Sigmoid colon (tissue), 7 donors: ENCODE measurements at regions of chr12 and their contacts with region 1.

Region 1: GRCh38 chr12:95532851-95533250 is 18.4 kb downstream of the USP44 start:
- DNase-seq: no peak
- H3K4me3 ChIP-seq: no peak overlapping the region
- H3K27ac ChIP-seq: no peak overlapping the region
- H3K4me1 ChIP-seq: peaks cover 0 to 13% (median 11%) of the 10 kb centered on the region in 4 donors
- H3K27me3 ChIP-seq: no peaks in the 10 kb centered on the region
- CTCF ChIP-seq: no peak
- EP300 ChIP-seq: no peak
- POLR2A ChIP-seq: no peak

Region 2: DNA sequence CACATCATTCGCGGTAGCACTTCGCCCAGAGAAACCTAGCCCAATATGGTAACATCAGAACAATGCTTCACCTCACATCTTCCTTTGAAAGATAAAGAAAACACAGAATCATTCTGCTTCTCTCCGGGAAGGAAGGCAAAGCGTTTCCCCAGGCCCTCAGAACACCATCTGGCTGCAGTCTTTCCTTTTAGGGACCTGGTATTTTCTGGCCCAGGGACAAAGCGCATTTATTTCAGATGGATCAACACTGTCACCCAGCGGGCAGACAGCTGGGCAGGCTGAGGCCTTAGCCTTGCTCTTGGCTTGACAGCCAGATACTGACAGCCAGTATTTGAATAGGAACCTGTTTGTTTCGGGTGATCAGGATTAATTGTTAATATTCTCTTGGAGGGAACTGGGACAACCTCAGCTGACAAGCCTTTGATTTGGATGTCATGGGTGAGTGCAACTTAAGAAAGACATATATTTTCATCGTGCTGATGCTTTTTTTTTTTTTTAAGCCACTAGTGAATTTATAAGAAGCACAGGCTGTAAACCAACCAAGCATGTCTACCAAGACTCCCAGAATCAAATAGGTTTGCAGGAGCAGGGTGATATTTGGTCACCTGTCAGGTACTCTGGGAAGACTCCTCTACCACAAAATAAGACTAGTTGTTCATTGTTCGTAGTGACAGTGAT is 196.3 kb before region 1 on chr12:
- intact Hi-C with region 1: loop called (anchors 5 kb)
- DNase-seq: peak; percentile 89
- H3K4me3 ChIP-seq: peak overlapping the region in 2 of 4 donors; percentile 8 to 24
- H3K27ac ChIP-seq: peak overlapping the region; percentile 81 to 87 (median 84)
- H3K4me1 ChIP-seq: peaks cover 0 to 40% (median 27%) of the 10 kb centered on the region in 4 donors
- H3K27me3 ChIP-seq: no peaks in the 10 kb centered on the region
- CTCF ChIP-seq: peak; percentile 45 to 76 (median 61)
- EP300 ChIP-seq: no peak
- POLR2A ChIP-seq: no peak

Region 3: GRCh38 chr12:95351748-95352147 is 181.1 kb before region 1 on chr12:
- intact Hi-C with region 1: loop called (anchors 5 kb)
- DNase-seq: no peak
- H3K4me3 ChIP-seq: no peak overlapping the region
- H3K27ac ChIP-seq: no peak overlapping the region
- H3K4me1 ChIP-seq: peaks cover 0 to under 1% (median 0%) of the 10 kb centered on the region in 4 donors
- H3K27me3 ChIP-seq: no peaks in the 10 kb centered on the region
- CTCF ChIP-seq: no peak
- EP300 ChIP-seq: no peak
- POLR2A ChIP-seq: no peak

Region 4: DNA sequence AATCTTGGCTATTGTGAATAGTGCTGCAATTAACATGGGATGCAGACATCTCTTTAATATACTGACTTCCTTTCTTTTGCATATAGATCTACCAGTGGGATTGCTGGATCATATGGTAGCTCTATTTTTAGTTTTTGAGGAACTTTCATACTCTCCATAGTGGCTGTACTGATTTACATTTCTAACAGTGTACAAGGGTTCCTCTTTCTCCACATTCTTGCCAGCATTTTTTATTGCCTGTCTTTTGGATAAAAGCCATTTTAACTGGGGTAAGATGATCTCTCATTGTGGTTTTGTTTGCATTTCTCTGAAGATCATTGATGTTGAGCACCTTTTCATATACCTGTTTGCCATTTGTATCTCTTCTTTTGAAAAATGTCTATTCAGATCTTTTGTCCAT is 418.7 kb after region 1 on chr12:
- intact Hi-C with region 1: no loop called
- DNase-seq: no peak
- H3K4me3 ChIP-seq: no peak overlapping the region
- H3K27ac ChIP-seq: no peak overlapping the region
- H3K4me1 ChIP-seq: no peaks in the 10 kb centered on the region
- H3K27me3 ChIP-seq: no peaks in the 10 kb centered on the region
- CTCF ChIP-seq: no peak
- EP300 ChIP-seq: no peak
- POLR2A ChIP-seq: no peak